ENCODE measurements at regions of chr15 and their contacts with region 1.

Region 1: GRCh38 chr15:64209680-64210334 is 47.0 kb upstream of the PPIB start:
- DNase-seq: no peak
- H3K4me3 ChIP-seq: no peak overlapping the region
- H3K27ac ChIP-seq: no peak overlapping the region
- H3K4me1 ChIP-seq: no peaks in the 10 kb centered on the region
- H3K27me3 ChIP-seq: no peaks in the 10 kb centered on the region
- CTCF ChIP-seq: peak in 1 of 3 donors; percentile 42
- EP300 ChIP-seq: no peak
- POLR2A ChIP-seq: no peak

Region 2: GRCh38 chr15:64355944-64356709 is 146.3 kb after region 1 on chr15 and contains the start of gene CSNK1G1:
- intact Hi-C with region 1: loop called in 1 of 4 experiments (anchors 10 kb)
- DNase-seq: peak; percentile 95 to 96 (median 95)
- H3K4me3 ChIP-seq: peak within 1 kb of the TSS; percentile 63
- H3K27ac ChIP-seq: peak within 1 kb of the TSS in 1 of 2 donors; percentile 54
- H3K4me1 ChIP-seq: peaks cover 2% of the 10 kb centered on the region
- H3K27me3 ChIP-seq: no peaks in the 10 kb centered on the region
- CTCF ChIP-seq: peak; percentile 20 to 52 (median 25)
- EP300 ChIP-seq: no peak
- POLR2A ChIP-seq: no peak
- total RNA-seq, gene CSNK1G1: 8.3 to 23.9 (median 14.8) TPM

Region 3: DNA sequence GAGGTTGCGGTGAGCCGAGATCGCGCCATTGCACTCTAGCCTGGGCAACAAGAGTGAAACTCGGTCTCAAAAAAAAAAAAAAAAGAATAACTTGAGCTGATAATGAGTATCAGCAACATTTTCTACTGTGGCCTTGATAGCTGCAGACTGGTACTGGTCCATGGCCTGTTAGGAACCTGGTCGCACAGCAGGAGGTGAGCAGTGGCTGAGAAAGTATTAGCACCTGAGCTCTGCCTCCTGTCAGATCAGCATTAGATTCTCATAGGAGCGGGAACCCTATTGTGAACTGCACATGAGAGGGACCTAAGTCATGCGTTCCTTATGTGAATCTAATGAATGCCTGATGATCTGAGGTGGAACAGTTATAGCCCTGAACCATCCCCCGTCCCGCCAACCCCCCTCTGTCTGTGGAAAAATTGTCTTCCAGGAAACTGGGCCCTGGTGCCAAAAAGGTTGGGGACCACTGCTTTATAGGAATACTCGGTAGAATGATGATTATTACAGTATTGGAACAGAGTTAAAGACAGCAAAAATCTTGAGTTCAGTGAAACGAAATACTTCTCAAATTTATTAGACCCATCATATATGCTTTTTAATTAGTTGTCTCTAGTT is 376.6 kb after region 1 on chr15:
- intact Hi-C with region 1: no loop called
- DNase-seq: no peak
- H3K4me3 ChIP-seq: no peak overlapping the region
- H3K27ac ChIP-seq: no peak overlapping the region
- H3K4me1 ChIP-seq: peaks cover 13% of the 10 kb centered on the region
- H3K27me3 ChIP-seq: no peaks in the 10 kb centered on the region
- CTCF ChIP-seq: no peak
- EP300 ChIP-seq: no peak
- POLR2A ChIP-seq: no peak